Activated CD4-positive, alpha-beta memory T cell treated with anti-CD3 and anti-CD28 coated beads for 36 hours (primary cell): ENCODE measurements at regions of chr20 and their contacts with region 1.

Region 1: GRCh38 chr20:34704177-34705007 is at the start of gene TP53INP2:
- DNase-seq: peak; percentile 89
- H3K4me3 Mint-ChIP-seq: peak within 1 kb of the TSS; percentile 82
- H3K27ac Mint-ChIP-seq: peak within 1 kb of the TSS; percentile 63
- H3K4me1 Mint-ChIP-seq: peaks cover 17% of the 10 kb centered on the region
- H3K27me3 Mint-ChIP-seq: no peaks in the 10 kb centered on the region
- total RNA-seq, gene TP53INP2: 2.3 to 2.5 TPM

Region 2: DNA sequence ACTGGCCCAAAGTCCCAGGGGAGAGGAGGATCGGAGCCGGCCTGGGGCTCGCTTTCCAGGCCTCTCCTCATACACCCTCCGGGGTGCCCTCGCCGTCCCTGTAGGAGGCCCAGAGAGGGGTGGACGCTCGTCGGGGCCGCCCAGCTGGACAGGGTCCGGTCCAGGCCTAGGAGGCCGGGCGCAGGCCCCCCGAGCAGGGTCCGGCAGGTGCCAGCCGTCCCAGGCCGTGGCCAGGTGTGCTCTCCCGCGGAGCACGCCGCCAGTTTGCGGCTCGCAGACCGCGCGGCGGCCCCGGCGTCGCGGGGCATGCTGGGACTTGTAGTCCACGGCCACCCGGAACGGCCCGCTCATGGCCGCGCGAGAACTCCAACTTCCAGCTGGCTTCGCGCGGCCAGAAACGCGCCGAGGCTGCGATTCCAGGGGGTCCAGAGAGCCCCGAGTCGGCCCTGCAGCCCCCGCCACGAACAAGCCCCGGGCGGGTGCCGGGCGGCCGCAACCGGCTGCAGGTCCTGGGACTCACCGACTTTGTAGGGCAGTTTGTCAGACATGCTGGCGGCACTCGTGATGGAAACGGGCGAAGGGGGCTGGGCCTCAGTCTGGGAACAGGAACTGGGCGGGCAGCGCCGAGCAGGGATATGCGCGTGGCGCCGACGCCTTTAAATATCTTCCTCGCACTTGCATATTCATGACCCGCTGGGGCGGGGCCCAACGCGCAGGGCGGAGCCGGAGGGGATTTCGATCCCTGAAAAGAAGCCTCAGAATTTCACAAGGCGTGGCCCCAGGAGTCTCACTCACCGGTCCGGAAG is 401.5 kb before region 1 on chr20 and contains the start of gene AHCY:
- CTCF ChIA-PET with region 1: no interaction called
- POLR2A ChIA-PET with region 1: no interaction called
- intact Hi-C with region 1: loop called (anchors 2 kb)
- DNase-seq: peak; percentile 97
- H3K4me3 Mint-ChIP-seq: peak within 1 kb of the TSS; percentile 89
- H3K27ac Mint-ChIP-seq: peak within 1 kb of the TSS; percentile 84
- H3K4me1 Mint-ChIP-seq: peaks cover 22% of the 10 kb centered on the region
- H3K27me3 Mint-ChIP-seq: no peaks in the 10 kb centered on the region
- total RNA-seq, gene AHCY: 160 to 163 TPM

Region 3: DNA sequence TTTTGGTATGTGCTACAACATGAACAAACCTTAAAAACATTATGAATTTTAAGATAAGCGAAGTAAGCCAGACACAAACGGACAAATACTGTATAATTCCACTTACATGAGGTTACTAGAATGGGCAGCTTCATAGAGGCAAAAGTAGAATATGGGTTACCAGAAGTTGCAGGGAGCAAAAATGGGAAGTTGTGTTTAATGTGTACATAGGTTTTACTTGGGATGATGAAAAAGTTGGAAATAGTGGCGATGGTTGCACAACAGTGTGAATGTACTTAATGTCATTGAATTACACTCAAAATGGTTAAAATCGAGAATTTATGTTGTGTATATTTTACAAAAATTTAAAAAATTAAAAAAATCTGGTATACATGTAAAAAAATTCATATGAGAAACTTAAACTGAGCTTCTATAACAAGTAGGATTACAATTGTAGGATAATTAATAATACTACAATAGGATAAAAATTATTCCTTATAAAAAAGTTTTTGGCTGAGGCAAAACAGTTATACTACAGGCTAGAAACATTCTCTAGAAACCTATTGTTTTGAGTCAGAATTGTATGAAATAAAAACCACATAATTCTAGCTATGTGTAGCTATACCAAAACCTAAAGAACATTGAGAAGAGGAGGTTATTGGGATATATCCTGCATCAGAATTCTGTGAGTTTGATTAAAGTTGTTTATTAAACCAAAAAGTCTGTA is 213.0 kb before region 1 on chr20:
- CTCF ChIA-PET with region 1: no interaction called
- POLR2A ChIA-PET with region 1: no interaction called
- intact Hi-C with region 1: no loop called
- DNase-seq: no peak
- H3K4me3 Mint-ChIP-seq: no peak overlapping the region
- H3K27ac Mint-ChIP-seq: no peak overlapping the region
- H3K4me1 Mint-ChIP-seq: peaks cover 2% of the 10 kb centered on the region
- H3K27me3 Mint-ChIP-seq: no peaks in the 10 kb centered on the region

Region 4: DNA sequence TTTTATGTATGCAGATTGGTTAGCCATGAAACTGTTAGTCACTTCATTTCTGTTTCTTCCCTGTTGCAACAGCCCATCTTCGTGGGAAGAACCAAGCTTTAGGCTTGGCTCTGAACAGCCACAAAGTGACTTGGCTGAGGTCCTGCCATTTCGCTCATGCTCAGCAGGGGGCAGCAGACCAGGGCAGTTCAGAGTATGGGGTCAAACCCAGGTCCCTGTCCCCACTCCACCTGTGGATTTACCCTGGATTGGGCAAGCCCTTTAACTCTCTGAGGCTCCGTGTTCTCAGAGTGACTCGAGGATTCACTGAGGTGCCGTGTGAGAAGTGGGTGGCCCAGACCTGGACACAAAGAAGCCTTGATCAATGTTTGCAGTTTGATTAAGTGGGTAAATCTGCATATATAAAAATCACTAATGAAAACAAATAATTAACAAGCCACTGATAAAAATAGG is 165.7 kb before region 1 on chr20:
- CTCF ChIA-PET with region 1: interaction called, 138 read pairs
- POLR2A ChIA-PET with region 1: interaction called, 3 read pairs
- intact Hi-C with region 1: loop called (anchors 1 kb)
- DNase-seq: peak; percentile 74
- H3K4me3 Mint-ChIP-seq: no peak overlapping the region
- H3K27ac Mint-ChIP-seq: no peak overlapping the region
- H3K4me1 Mint-ChIP-seq: peaks cover 34% of the 10 kb centered on the region
- H3K27me3 Mint-ChIP-seq: no peaks in the 10 kb centered on the region

Region 5: GRCh38 chr20:34579979-34580940 is 124.1 kb before region 1 on chr20:
- CTCF ChIA-PET with region 1: no interaction called
- POLR2A ChIA-PET with region 1: no interaction called
- intact Hi-C with region 1: loop called (anchors 2 kb)
- DNase-seq: peak; percentile 49
- H3K4me3 Mint-ChIP-seq: no peak overlapping the region
- H3K27ac Mint-ChIP-seq: peak overlapping the region; percentile 92
- H3K4me1 Mint-ChIP-seq: peaks cover 31% of the 10 kb centered on the region
- H3K27me3 Mint-ChIP-seq: no peaks in the 10 kb centered on the region

Region 6: GRCh38 chr20:34720266-34720665 is 15.9 kb after region 1 on chr20:
- CTCF ChIA-PET with region 1: interaction called, 3 read pairs
- POLR2A ChIA-PET with region 1: no interaction called
- intact Hi-C with region 1: loop called (anchors 1 kb)
- DNase-seq: no peak
- H3K4me3 Mint-ChIP-seq: no peak overlapping the region
- H3K27ac Mint-ChIP-seq: no peak overlapping the region
- H3K4me1 Mint-ChIP-seq: peaks cover 30% of the 10 kb centered on the region
- H3K27me3 Mint-ChIP-seq: no peaks in the 10 kb centered on the region